Left ventricle myocardium inferior (tissue), 1 donor: ENCODE measurements at regions of chr9 and their contacts with region 1.

Region 1: GRCh38 chr9:12403721-12404120 is 289.5 kb upstream of the TYRP1 start:
- DNase-seq: no peak
- H3K4me3 ChIP-seq: no peak overlapping the region
- H3K27ac ChIP-seq: no peak overlapping the region
- H3K4me1 ChIP-seq: no peaks in the 10 kb centered on the region
- H3K27me3 ChIP-seq: no peaks in the 10 kb centered on the region
- CTCF ChIP-seq: no peak

Region 2: DNA sequence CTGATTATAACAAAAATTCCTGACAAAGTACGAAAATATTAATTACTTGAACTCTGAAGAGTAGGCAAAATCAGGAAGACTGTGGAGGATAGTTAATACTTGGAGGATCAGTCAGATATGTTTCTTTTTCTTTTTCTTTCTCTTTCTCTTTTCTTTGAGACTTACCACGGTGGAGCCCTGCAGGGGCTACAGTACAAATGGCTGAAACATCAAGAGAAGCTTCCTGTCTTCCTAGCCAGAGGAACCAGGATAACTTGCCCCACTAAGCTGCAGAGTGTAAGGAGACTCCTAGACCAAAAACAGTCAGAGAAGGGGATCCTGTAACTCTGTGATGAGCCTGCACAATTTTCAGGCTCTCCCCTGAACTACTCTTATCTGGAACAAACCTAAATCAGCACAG is 35.2 kb before region 1 on chr9:
- intact Hi-C with region 1: no loop called
- DNase-seq: no peak
- H3K4me3 ChIP-seq: no peak overlapping the region
- H3K27ac ChIP-seq: no peak overlapping the region
- H3K4me1 ChIP-seq: no peaks in the 10 kb centered on the region
- H3K27me3 ChIP-seq: no peaks in the 10 kb centered on the region
- CTCF ChIP-seq: no peak

Region 3: GRCh38 chr9:12464910-12465512 is 61.3 kb after region 1 on chr9:
- intact Hi-C with region 1: loop called (anchors 10 kb)
- DNase-seq: no peak
- H3K4me3 ChIP-seq: no peak overlapping the region
- H3K27ac ChIP-seq: no peak overlapping the region
- H3K4me1 ChIP-seq: no peaks in the 10 kb centered on the region
- H3K27me3 ChIP-seq: no peaks in the 10 kb centered on the region
- CTCF ChIP-seq: peak; percentile 66